Upper lobe of right lung (tissue), 1 donor: ENCODE measurements at regions of chr6 and their contacts with region 1.

Region 1: GRCh38 chr6:16183187-16183664 is 54.3 kb downstream of the MYLIP start:
- DNase-seq: no peak
- ATAC-seq: peak; percentile 56
- H3K4me3 ChIP-seq: no peak overlapping the region
- H3K27ac ChIP-seq: no peak overlapping the region
- H3K4me1 ChIP-seq: peaks cover 4% of the 10 kb centered on the region
- H3K27me3 ChIP-seq: no peaks in the 10 kb centered on the region
- CTCF ChIP-seq: peak; percentile 78

Region 2: GRCh38 chr6:15691250-15691869 is 491.9 kb before region 1 on chr6:
- intact Hi-C with region 1: loop called (anchors 5 kb)
- DNase-seq: peak; percentile 90
- ATAC-seq: peak; percentile 100
- H3K4me3 ChIP-seq: peak overlapping the region; percentile 31
- H3K27ac ChIP-seq: no peak overlapping the region
- H3K4me1 ChIP-seq: peaks cover 13% of the 10 kb centered on the region
- H3K27me3 ChIP-seq: no peaks in the 10 kb centered on the region
- CTCF ChIP-seq: peak; percentile 100

Region 3: GRCh38 chr6:16216501-16217155 is 33.4 kb after region 1 on chr6:
- intact Hi-C with region 1: no loop called
- DNase-seq: no peak
- ATAC-seq: peak; percentile 27
- H3K4me3 ChIP-seq: peak overlapping the region; percentile 20
- H3K27ac ChIP-seq: no peak overlapping the region
- H3K4me1 ChIP-seq: peaks cover 4% of the 10 kb centered on the region
- H3K27me3 ChIP-seq: no peaks in the 10 kb centered on the region
- CTCF ChIP-seq: no peak

Region 4: GRCh38 chr6:16409531-16410441 is 226.6 kb after region 1 on chr6:
- intact Hi-C with region 1: no loop called
- DNase-seq: peak; percentile 67
- ATAC-seq: peak; percentile 90
- H3K4me3 ChIP-seq: no peak overlapping the region
- H3K27ac ChIP-seq: no peak overlapping the region
- H3K4me1 ChIP-seq: no peaks in the 10 kb centered on the region
- H3K27me3 ChIP-seq: no peaks in the 10 kb centered on the region
- CTCF ChIP-seq: peak; percentile 70